A549 (cell line): ENCODE measurements at regions of chr17 and their contacts with region 1.

Region 1: DNA sequence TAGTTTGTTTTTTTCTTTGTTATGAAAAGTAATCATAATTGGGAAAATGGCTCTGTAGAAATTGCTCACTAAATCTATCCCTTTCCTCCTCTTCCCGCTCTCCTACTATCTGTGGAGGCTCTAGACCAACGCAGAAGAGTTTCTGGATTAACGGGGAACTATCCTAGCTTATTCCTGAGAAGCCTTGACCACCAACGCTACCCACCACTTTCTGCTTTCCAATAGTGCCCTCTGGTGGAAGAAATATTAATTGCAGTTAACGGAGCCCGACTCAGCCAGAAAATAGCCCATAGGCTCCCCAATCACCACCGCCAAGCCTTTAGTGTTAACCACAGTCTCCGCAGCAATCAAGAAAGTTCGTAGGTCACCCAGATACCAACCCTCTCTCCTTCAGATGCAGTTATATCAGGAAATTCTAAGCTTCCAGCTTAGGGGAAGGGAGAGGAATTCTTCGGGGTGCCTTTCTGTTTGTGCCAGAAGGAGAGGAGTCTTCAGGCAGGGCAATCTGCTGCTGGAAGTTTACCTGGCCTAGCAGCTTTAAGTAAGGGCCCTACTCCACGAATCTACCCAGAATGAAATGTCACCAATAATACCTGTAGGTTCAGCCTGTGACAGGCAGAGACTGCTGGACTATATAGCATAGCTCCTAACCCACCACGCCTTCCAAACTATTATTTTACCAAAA is 23.0 kb upstream of the NSRP1 start:
- DNase-seq: peak; percentile 63 to 94
- ATAC-seq: peak; percentile 79 to 92
- H3K4me3 ChIP-seq: no peak overlapping the region
- H3K27ac ChIP-seq: no peak overlapping the region
- H3K4me1 ChIP-seq: peaks cover 6% of the 10 kb centered on the region; the same call in 1 of the 3 replicates
- CTCF ChIP-seq: peak; percentile 97
- EP300 ChIP-seq: no peak
- POLR2A ChIP-seq: no peak
- RAD21 ChIP-seq: peak; percentile 95 to 96

Region 2: DNA sequence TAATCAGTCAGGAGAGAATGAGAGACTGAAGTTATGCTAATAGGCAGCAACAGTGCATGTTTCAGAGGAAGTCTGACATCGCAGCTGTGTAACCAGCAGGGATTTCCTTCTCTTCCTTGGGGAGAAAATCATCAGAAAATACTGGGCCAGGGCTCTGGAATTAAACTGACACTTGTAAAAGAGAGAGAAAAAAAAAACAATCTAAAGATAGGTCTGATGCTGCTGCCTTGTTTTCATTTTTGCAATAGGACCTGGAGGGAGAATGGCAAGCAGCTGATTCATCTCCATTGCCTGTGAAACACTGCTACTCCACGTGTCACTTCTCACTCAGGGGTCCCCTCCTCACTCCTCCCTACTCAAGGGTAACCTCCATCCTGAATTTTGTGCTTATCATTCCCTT is 453.2 kb before region 1 on chr17:
- CTCF ChIA-PET with region 1: interaction called, 27 read pairs
- POLR2A ChIA-PET with region 1: no interaction called
- DNase-seq: no peak
- ATAC-seq: no peak
- H3K4me3 ChIP-seq: no peak overlapping the region
- H3K27ac ChIP-seq: peak overlapping the region; percentile 10 to 82; a peak in 3 of 6 replicates
- H3K4me1 ChIP-seq: peaks cover 47% of the 10 kb centered on the region
- CTCF ChIP-seq: no peak
- EP300 ChIP-seq: no peak
- POLR2A ChIP-seq: no peak
- RAD21 ChIP-seq: no peak

Region 3: DNA sequence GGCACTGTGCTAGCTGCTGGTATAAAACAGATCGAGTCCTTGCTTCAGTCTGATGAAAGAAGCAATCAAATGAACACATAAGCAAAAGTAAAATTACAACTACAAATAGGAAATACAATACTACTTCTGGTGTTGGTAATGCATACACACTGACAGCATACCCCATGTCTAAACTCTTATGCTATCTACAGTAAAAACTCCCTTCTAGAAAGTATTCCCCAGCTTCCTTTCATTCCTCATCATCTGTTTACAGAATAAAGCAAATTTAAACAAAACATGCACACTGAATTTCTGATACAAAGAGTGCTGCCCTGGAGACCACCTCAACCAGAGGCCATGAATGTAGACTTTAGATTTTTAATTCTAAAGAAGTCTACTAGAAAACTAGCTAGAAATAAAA is 273.2 kb before region 1 on chr17:
- CTCF ChIA-PET with region 1: interaction called, 11 read pairs
- POLR2A ChIA-PET with region 1: no interaction called
- DNase-seq: no peak
- ATAC-seq: no peak
- H3K4me3 ChIP-seq: no peak overlapping the region
- H3K27ac ChIP-seq: no peak overlapping the region
- H3K4me1 ChIP-seq: no peaks in the 10 kb centered on the region
- CTCF ChIP-seq: no peak
- EP300 ChIP-seq: no peak
- POLR2A ChIP-seq: no peak
- RAD21 ChIP-seq: no peak

Region 4: GRCh38 chr17:30021708-30022317 is 71.8 kb before region 1 on chr17:
- CTCF ChIA-PET with region 1: interaction called, 122 read pairs
- POLR2A ChIA-PET with region 1: no interaction called
- DNase-seq: peak; percentile 65 to 70
- ATAC-seq: peak; percentile 73; a peak in 4 of 6 replicates
- H3K4me3 ChIP-seq: no peak overlapping the region
- H3K27ac ChIP-seq: no peak overlapping the region
- H3K4me1 ChIP-seq: no peaks in the 10 kb centered on the region
- CTCF ChIP-seq: peak; percentile 97
- EP300 ChIP-seq: no peak
- POLR2A ChIP-seq: no peak
- RAD21 ChIP-seq: peak; percentile 85 to 86

Region 5: GRCh38 chr17:30062372-30062771 is 31.2 kb before region 1 on chr17:
- CTCF ChIA-PET with region 1: interaction called, 28 read pairs
- POLR2A ChIA-PET with region 1: no interaction called
- DNase-seq: no peak
- ATAC-seq: no peak
- H3K4me3 ChIP-seq: no peak overlapping the region
- H3K27ac ChIP-seq: no peak overlapping the region
- H3K4me1 ChIP-seq: no peaks in the 10 kb centered on the region
- CTCF ChIP-seq: no peak
- EP300 ChIP-seq: no peak
- POLR2A ChIP-seq: no peak
- RAD21 ChIP-seq: no peak

Region 6: DNA sequence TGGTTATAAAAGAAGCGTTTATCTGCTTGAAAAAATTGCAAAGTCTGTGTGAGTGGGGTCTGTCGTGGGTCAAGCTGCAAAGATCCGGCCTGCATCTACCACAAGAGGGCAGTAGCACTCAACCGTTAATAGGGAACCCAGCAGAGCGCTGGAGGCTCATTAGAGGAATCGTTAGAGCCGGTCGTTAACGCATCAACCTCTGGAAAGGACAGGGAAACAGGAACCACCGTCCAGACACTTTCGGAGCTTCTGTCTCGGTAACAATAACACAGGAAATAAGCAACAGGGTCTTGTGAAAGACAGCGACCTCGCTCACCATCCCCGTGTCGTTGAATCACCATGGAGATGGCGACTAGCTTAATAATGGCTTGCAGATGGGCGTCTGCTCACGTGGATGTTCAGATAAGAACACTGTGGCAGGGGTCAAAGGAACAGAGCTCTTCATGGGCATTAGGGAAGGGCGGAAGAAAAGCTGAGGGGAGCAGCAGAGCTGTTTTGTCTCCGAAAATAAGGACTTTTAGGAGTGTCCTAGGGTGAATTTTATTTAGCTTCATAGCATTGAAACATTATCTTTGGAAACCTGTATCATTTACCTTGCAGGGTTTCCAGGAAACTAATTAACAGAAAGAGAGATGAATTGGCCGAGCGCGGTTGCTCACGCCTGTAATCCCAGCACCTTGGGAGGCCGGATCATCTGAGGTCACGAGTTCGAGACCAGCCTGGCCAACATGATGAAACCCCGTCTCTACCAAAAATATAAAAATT is 11.2 kb after region 1 on chr17:
- CTCF ChIA-PET with region 1: interaction called, 158 read pairs
- POLR2A ChIA-PET with region 1: no interaction called
- DNase-seq: peak; percentile 81 to 82
- ATAC-seq: peak; percentile 97 to 99
- H3K4me3 ChIP-seq: peak overlapping the region; percentile 42
- H3K27ac ChIP-seq: peak overlapping the region; percentile 49 to 76
- H3K4me1 ChIP-seq: 0 out of 3 replicates have a peak, but pooled peaks cover 5% of the 10 kb centered on the region
- CTCF ChIP-seq: peak; percentile 99
- EP300 ChIP-seq: no peak
- POLR2A ChIP-seq: no peak
- RAD21 ChIP-seq: peak; percentile 91 to 92

Region 7: DNA sequence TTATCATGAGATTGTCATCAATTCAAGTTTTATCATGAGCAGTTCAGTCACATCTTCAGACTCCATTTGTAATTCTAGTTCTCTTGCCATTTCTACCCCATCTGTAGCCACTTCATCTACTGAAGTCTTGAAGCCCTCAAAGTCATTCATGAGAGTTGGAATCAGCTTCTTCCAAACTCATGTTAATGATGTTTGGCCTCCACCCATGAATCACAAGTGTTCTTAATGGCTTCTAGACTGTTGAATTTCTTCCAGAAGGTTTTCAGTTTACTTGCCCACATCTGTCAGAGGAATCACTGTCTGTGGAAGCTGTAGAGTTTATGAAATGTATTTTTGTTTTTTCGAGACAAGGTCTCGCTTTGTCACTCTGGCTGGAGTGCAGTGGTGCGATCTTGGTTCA is 39.0 kb after region 1 on chr17:
- CTCF ChIA-PET with region 1: no interaction called
- POLR2A ChIA-PET with region 1: no interaction called
- DNase-seq: no peak
- ATAC-seq: no peak
- H3K4me3 ChIP-seq: no peak overlapping the region
- H3K27ac ChIP-seq: no peak overlapping the region
- H3K4me1 ChIP-seq: 0 out of 3 replicates have a peak, but pooled peaks cover 4% of the 10 kb centered on the region
- CTCF ChIP-seq: no peak
- EP300 ChIP-seq: no peak
- POLR2A ChIP-seq: no peak
- RAD21 ChIP-seq: no peak

Region 8: DNA sequence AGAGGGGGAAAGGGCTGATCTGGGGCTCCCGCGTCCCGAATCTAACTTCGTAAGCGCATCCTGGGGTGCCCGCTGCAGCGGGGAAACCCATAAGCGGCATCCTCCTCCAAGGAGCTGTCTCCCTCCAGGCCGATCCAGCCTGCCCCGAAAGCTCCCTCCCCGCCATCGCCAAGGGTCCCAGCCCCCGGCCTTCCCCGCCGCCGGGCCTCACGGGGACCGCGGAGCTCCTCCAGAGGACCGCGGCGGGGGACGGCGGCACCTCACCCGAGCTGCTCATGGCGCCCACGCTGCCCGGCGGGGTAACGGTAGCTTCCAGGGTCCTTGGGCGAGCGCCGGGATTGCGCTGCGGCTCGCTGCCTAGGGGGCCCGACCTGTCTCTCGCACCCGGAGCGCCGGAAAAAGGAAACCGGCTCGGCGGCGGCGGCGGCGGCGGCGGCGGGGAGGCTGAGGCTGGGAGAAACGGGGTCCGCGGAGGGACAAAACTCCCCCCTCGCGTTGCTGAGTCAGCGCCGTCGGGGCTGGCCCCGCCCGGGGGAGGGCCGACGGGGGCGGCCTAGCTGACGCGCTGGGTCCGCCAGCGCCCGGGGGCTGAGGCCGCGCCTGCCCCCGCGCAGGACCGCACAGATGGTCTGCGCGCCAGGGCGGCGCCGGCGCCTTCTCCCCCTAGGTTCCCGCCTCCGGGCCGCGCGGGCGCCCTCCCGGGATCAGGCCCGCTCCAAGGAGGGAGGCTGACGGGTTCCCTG is 198.1 kb after region 1 on chr17 and contains the start of gene BLMH:
- CTCF ChIA-PET with region 1: interaction called, 11 read pairs
- POLR2A ChIA-PET with region 1: no interaction called
- DNase-seq: peak; percentile 79 to 80
- ATAC-seq: peak; percentile 86 to 93
- H3K4me3 ChIP-seq: peak within 1 kb of the TSS; percentile 80
- H3K27ac ChIP-seq: peak within 1 kb of the TSS; percentile 82 to 92
- H3K4me1 ChIP-seq: peaks cover 10% of the 10 kb centered on the region
- CTCF ChIP-seq: no peak
- EP300 ChIP-seq: no peak
- POLR2A ChIP-seq: peak; percentile 86
- RAD21 ChIP-seq: peak in 1 of 2 experiments; percentile 14; a peak in 1 of 5 replicates
- polyA plus RNA-seq, gene BLMH: 36.4 and 38.5 TPM in 2 replicates